ENCODE measurements at regions of chr2 and their contacts with region 1.

Region 1: GRCh38 chr2:171160119-171160955 is at the start of gene TLK1:
- DNase-seq: peak; percentile 87
- ATAC-seq: peak; percentile 64
- H3K4me3 Mint-ChIP-seq: peak within 1 kb of the TSS; percentile 95
- H3K27ac Mint-ChIP-seq: peak within 1 kb of the TSS; percentile 98
- H3K4me1 Mint-ChIP-seq: peaks cover 59% of the 10 kb centered on the region
- H3K27me3 Mint-ChIP-seq: no peaks in the 10 kb centered on the region
- total RNA-seq, gene TLK1: 71.8 to 83.7 TPM

Region 2: GRCh38 chr2:170973492-170974303 is 186.6 kb before region 1 on chr2:
- CTCF ChIA-PET with region 1: interaction called, 11 read pairs
- POLR2A ChIA-PET with region 1: interaction called, 3 read pairs
- intact Hi-C with region 1: loop called (anchors 1 kb)
- DNase-seq: peak; percentile 93
- ATAC-seq: peak; percentile 93
- H3K4me3 Mint-ChIP-seq: peak overlapping the region; percentile 67
- H3K27ac Mint-ChIP-seq: peak overlapping the region; percentile 80
- H3K4me1 Mint-ChIP-seq: peaks cover 10% of the 10 kb centered on the region
- H3K27me3 Mint-ChIP-seq: no peaks in the 10 kb centered on the region

Region 3: GRCh38 chr2:171086352-171087290 is 73.7 kb before region 1 on chr2:
- CTCF ChIA-PET with region 1: interaction called, 14 read pairs
- POLR2A ChIA-PET with region 1: no interaction called
- intact Hi-C with region 1: loop called (anchors 1 to 2 kb)
- DNase-seq: peak; percentile 79
- ATAC-seq: peak; percentile 75
- H3K4me3 Mint-ChIP-seq: peak overlapping the region; percentile 69
- H3K27ac Mint-ChIP-seq: peak overlapping the region; percentile 73
- H3K4me1 Mint-ChIP-seq: peaks cover 71% of the 10 kb centered on the region
- H3K27me3 Mint-ChIP-seq: no peaks in the 10 kb centered on the region

Region 4: GRCh38 chr2:171124541-171124940 is 35.8 kb before region 1 on chr2:
- CTCF ChIA-PET with region 1: no interaction called
- POLR2A ChIA-PET with region 1: no interaction called
- intact Hi-C with region 1: no loop called
- DNase-seq: no peak
- ATAC-seq: no peak
- H3K4me3 Mint-ChIP-seq: no peak overlapping the region
- H3K27ac Mint-ChIP-seq: no peak overlapping the region
- H3K4me1 Mint-ChIP-seq: peaks cover 55% of the 10 kb centered on the region
- H3K27me3 Mint-ChIP-seq: no peaks in the 10 kb centered on the region

Region 5: DNA sequence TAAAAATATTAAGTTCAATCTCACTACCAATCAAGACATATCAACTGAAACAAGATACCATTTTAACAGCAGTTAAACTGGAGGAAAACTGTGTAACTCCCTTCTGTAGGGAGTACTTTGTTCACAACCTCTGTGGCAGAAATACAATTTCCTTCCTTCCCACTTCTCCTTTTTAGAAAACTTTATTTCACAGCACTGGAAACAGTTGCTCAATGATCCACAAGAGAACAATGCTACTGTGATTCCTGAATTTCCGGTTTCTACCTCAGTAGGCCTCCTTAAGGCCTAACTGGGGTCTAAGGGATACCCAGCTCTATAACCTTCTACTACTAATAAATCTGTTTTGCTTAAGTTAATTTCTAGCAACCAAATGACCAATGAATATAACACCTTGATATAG is 13.7 kb before region 1 on chr2:
- CTCF ChIA-PET with region 1: interaction called, 20 read pairs
- POLR2A ChIA-PET with region 1: interaction called, 3 read pairs
- intact Hi-C with region 1: loop called in 1 of 2 experiments (anchors 2 kb)
- DNase-seq: no peak
- ATAC-seq: no peak
- H3K4me3 Mint-ChIP-seq: no peak overlapping the region
- H3K27ac Mint-ChIP-seq: peak overlapping the region; percentile 67
- H3K4me1 Mint-ChIP-seq: peaks cover 82% of the 10 kb centered on the region
- H3K27me3 Mint-ChIP-seq: no peaks in the 10 kb centered on the region

Region 6: GRCh38 chr2:171260471-171261424 is 100.4 kb after region 1 on chr2:
- CTCF ChIA-PET with region 1: interaction called, 3 read pairs
- POLR2A ChIA-PET with region 1: no interaction called
- intact Hi-C with region 1: loop called (anchors 1 to 2 kb)
- DNase-seq: peak; percentile 50
- ATAC-seq: peak; percentile 90
- H3K4me3 Mint-ChIP-seq: peak overlapping the region; percentile 34
- H3K27ac Mint-ChIP-seq: peak overlapping the region; percentile 64
- H3K4me1 Mint-ChIP-seq: peaks cover 34% of the 10 kb centered on the region
- H3K27me3 Mint-ChIP-seq: no peaks in the 10 kb centered on the region

Region 7: DNA sequence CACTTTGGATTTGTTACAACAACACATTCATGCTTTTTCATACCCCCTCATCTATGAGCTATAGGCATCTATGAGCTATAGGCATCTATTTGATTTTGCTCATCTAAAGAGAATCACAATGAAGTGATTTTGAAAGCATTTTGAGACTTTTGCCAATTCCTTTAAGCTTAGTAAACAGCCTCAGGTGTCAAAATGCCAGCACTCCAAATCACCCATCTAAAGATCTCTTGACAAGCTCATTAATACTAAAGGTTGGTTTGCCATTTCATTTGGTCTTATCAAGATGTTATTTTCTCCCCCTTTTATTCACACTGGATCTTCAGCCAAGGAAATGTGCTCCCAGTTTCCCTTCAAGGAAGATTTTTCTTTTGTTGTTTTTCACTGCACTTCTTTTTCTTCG is 111.0 kb after region 1 on chr2:
- CTCF ChIA-PET with region 1: no interaction called
- POLR2A ChIA-PET with region 1: no interaction called
- intact Hi-C with region 1: no loop called
- DNase-seq: no peak
- ATAC-seq: no peak
- H3K4me3 Mint-ChIP-seq: no peak overlapping the region
- H3K27ac Mint-ChIP-seq: no peak overlapping the region
- H3K4me1 Mint-ChIP-seq: no peaks in the 10 kb centered on the region
- H3K27me3 Mint-ChIP-seq: no peaks in the 10 kb centered on the region

Region 8: GRCh38 chr2:172416447-172417058 is 1256.2 kb after region 1 on chr2:
- CTCF ChIA-PET with region 1: no interaction called
- POLR2A ChIA-PET with region 1: no interaction called
- intact Hi-C with region 1: no loop called
- DNase-seq: no peak
- ATAC-seq: no peak
- H3K4me3 Mint-ChIP-seq: no peak overlapping the region
- H3K27ac Mint-ChIP-seq: no peak overlapping the region
- H3K4me1 Mint-ChIP-seq: no peaks in the 10 kb centered on the region
- H3K27me3 Mint-ChIP-seq: no peaks in the 10 kb centered on the region